ENCODE measurements at regions of chr13 and their contacts with region 1.

Region 1: GRCh38 chr13:40666045-40666904 is at the start of gene FOXO1:
- DNase-seq: peak; percentile 88
- H3K4me3 Mint-ChIP-seq: peak within 1 kb of the TSS; percentile 91
- H3K27ac Mint-ChIP-seq: peak within 1 kb of the TSS; percentile 95
- H3K4me1 Mint-ChIP-seq: peaks cover 45% of the 10 kb centered on the region
- H3K27me3 Mint-ChIP-seq: peaks cover 2% of the 10 kb centered on the region
- total RNA-seq, gene FOXO1: 41.9 and 43.1 TPM in 2 replicates

Region 2: DNA sequence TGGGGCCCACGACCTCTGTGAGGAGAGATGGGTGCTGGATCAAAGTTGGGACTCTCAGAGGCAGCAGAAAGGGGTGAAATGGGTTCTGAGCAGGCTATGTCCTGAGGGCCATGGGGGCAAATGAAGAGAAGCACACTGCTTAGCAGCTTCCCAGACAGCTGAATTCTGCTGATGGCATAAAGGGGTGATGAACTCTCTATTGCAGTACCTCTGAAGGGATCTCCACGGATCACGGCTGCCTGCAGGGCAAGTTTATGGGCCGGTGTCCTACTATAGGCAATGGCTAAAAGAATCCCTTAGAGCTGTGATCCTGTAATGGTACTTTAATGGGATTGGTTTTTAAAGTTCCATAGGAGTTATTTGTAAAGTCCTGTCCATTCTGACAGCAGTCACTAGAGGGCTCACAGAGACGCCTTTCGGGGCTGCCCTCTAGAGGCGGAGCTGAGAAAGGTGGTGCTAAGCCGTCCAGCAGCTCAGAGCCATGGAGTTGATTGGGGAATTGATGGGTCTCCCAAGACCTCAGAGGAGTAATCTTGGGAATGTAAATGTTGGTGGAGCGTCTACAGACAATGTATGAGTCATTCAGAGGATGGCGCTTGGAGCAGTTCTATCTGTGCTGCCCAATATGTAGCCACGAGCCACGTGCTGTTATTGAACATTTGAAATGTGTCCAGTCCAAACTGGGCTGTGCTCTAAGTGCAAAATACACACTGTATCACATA is 723.6 kb before region 1 on chr13:
- intact Hi-C with region 1: loop called (anchors 5 kb)
- DNase-seq: peak; percentile 54
- H3K4me3 Mint-ChIP-seq: no peak overlapping the region
- H3K27ac Mint-ChIP-seq: no peak overlapping the region
- H3K4me1 Mint-ChIP-seq: peaks cover 6% of the 10 kb centered on the region
- H3K27me3 Mint-ChIP-seq: peaks cover 4% of the 10 kb centered on the region

Region 3: DNA sequence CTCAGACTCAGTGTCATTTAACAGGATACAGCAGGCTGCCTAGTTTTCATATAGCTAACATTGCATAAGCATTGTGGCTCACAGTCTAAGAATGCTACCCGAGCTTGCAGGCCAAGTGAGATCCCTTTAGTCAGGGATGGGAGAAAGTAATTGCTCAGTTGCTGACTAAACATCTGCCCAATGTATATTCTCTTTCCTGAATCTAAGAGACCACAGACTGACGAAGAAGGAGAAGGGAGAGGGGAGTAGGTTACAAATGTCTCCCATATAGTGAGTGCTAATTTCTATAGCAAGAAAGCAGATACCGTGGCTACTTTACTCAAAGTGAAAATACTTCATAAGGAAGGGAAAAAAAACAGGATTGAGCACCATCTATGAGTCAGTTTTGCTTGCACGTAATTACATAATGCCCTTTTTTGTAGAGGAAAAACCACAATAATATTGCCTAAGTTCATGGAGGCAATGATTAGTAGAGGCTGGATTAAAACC is 556.9 kb before region 1 on chr13:
- intact Hi-C with region 1: loop called (anchors 1 kb)
- DNase-seq: no peak
- H3K4me3 Mint-ChIP-seq: no peak overlapping the region
- H3K27ac Mint-ChIP-seq: peak overlapping the region; percentile 31
- H3K4me1 Mint-ChIP-seq: peaks cover 47% of the 10 kb centered on the region
- H3K27me3 Mint-ChIP-seq: no peaks in the 10 kb centered on the region

Region 4: GRCh38 chr13:40318366-40318765 is 347.9 kb before region 1 on chr13:
- intact Hi-C with region 1: loop called (anchors 2 kb)
- DNase-seq: no peak
- H3K4me3 Mint-ChIP-seq: no peak overlapping the region
- H3K27ac Mint-ChIP-seq: no peak overlapping the region
- H3K4me1 Mint-ChIP-seq: peaks cover 70% of the 10 kb centered on the region
- H3K27me3 Mint-ChIP-seq: no peaks in the 10 kb centered on the region

Region 5: GRCh38 chr13:40517486-40518480 is 148.5 kb before region 1 on chr13:
- intact Hi-C with region 1: loop called (anchors 1 kb)
- DNase-seq: no peak
- H3K4me3 Mint-ChIP-seq: peak overlapping the region; percentile 62
- H3K27ac Mint-ChIP-seq: peak overlapping the region; percentile 69
- H3K4me1 Mint-ChIP-seq: peaks cover 83% of the 10 kb centered on the region
- H3K27me3 Mint-ChIP-seq: no peaks in the 10 kb centered on the region

Region 6: DNA sequence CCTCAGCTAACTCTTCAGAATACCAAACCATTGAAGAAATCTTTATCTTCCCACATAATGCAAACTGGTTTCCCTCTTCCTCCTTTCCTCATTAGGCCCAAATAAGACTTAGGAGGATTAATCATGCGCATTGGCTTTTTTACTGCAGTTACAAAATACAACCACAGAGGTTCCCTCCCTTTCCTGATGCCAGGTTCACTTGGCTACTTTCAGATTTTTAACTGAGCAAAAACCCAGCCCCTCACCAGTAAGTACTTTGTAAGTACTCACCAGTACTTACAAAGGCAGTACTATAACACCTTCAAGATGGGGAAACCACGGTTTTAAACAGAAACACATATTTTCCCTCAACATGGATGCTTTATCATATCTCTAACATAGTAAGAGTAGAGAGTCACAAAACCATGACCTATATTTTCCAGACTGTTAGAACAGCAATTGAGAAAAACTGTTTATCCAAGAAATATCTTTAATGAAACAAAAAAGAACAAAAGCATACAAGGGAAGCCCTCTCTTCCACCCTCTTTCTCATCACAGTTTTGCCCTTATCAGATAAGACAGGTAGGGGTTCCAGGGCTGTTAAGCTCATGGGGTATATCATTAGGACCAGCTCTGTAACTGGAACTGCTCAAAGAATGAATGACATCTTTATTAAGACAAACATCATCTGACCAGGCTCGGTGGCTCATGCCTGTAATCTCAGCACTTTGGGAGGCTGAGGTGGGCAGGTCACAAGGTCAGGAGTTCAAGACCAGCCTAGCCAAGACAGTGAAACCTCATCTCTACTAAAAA is 12.6 kb before region 1 on chr13:
- intact Hi-C with region 1: loop called (anchors 1 kb)
- DNase-seq: no peak
- H3K4me3 Mint-ChIP-seq: peak overlapping the region; percentile 60
- H3K27ac Mint-ChIP-seq: peak overlapping the region; percentile 87
- H3K4me1 Mint-ChIP-seq: peaks cover 89% of the 10 kb centered on the region
- H3K27me3 Mint-ChIP-seq: no peaks in the 10 kb centered on the region

Region 7: GRCh38 chr13:41061075-41061913 is 395.0 kb after region 1 on chr13 and contains the start of gene WBP4:
- intact Hi-C with region 1: loop called (anchors 2 kb)
- DNase-seq: peak; percentile 85
- H3K4me3 Mint-ChIP-seq: peak within 1 kb of the TSS; percentile 98
- H3K27ac Mint-ChIP-seq: peak within 1 kb of the TSS; percentile 99
- H3K4me1 Mint-ChIP-seq: peaks cover 72% of the 10 kb centered on the region
- H3K27me3 Mint-ChIP-seq: peaks cover 6% of the 10 kb centered on the region
- total RNA-seq, gene WBP4: 13.4 and 14.0 TPM in 2 replicates

Measured in activated T-helper 1 cell treated with anti-CD3 and anti-CD28 coated beads, Interleukin-12 subunit alpha, Interleukin-12 subunit beta, Interleukin-2, Interleukin-4 antibody, amounts not matched to agents 30 ng/mL and 10 ng/mL and 1 ng/mL, durations not matched to agents 14 hours and 24 hours and 36 hours (primary cell).